ENCODE measurements at regions of chr6 and their contacts with region 1.

Region 1: GRCh38 chr6:26025894-26026832 is 61.1 kb upstream of the HFE start:
- DNase-seq: peak; percentile 90 to 93
- H3K4me3 ChIP-seq: peak overlapping the region; percentile 75 to 89 (median 82)
- H3K27ac ChIP-seq: peak overlapping the region; percentile 80
- H3K4me1 ChIP-seq: peaks cover 3 to 26% (median 10%) of the 10 kb centered on the region in 4 experiments; a peak in 5 of 7 replicates
- H3K27me3 ChIP-seq: no peaks in the 10 kb centered on the region
- CTCF ChIP-seq: peak; percentile 63 to 93 (median 77)
- EP300 ChIP-seq: peak in 1 of 2 experiments; percentile 43; a peak in 1 of 3 replicates
- POLR2A ChIP-seq: peak; percentile 85 to 91; a peak in 2 of 3 replicates
- RAD21 ChIP-seq: peak; percentile 45 to 47

Region 2: DNA sequence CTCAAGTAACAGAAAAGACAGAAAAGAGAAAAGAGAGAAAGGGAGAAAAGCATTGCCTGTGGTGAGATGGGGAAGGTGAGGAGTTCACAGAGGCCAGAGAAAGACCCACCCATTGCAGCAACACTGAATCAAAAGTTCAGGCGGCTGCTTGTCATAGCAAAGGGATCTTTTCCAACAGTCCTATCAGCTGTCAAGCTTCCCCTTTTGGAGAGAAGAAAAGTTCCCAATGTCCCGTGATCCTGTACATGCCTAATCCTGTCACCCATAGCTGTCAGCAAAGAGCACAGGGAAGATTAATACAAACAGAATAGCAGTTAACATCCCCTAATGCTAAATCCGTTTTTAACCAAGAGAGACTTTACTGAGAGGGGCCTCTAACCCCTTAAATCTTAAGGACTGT is 72.4 kb before region 1 on chr6:
- CTCF ChIA-PET with region 1: no interaction called
- POLR2A ChIA-PET with region 1: no interaction called
- DNase-seq: no peak
- H3K4me3 ChIP-seq: no peak overlapping the region
- H3K27ac ChIP-seq: no peak overlapping the region
- H3K4me1 ChIP-seq: peaks cover 0 to 1% (median 0%) of the 10 kb centered on the region in 4 experiments; a peak in 1 of 7 replicates
- H3K27me3 ChIP-seq: no peaks in the 10 kb centered on the region
- CTCF ChIP-seq: no peak
- EP300 ChIP-seq: no peak
- POLR2A ChIP-seq: no peak
- RAD21 ChIP-seq: no peak

Region 3: DNA sequence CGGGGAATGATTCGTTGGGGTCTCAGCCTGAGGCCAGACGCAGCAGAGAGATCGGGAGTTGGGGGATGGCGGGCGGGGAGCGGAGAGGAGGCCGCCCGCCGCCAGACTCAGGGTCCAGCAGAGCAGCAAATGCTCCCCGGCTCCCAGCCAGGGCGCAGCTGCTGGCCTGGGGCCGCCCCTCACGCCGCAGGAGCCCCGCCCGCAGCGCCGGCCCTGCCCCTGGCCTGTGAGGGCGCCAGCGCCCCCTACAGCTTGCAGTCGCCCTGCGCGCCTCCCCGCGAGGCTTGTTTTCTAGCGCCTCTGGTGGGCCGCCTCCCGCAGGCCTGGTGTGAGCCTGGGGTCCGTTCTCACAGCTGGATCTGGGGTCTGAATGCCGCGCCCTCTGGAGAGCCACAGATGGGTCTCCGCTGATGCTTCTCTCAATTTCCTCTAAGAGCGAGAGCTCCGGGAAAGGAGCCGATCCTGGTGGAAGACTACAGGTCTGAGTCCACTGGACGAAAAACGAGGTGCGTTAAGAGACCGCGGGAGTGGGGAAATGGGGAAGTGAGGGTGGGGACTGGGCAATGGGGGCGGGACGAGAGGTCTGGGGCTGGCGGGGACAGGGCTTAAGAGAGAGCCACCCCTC is 33.6 kb before region 1 on chr6:
- CTCF ChIA-PET with region 1: interaction called, 3 read pairs
- POLR2A ChIA-PET with region 1: interaction called, 36 read pairs
- DNase-seq: peak; percentile 82 to 99
- H3K4me3 ChIP-seq: peak overlapping the region; percentile 45 to 81 (median 68)
- H3K27ac ChIP-seq: no peak overlapping the region
- H3K4me1 ChIP-seq: peaks cover 0 to 8% (median 5%) of the 10 kb centered on the region in 4 experiments; a peak in 4 of 7 replicates
- H3K27me3 ChIP-seq: no peaks in the 10 kb centered on the region
- CTCF ChIP-seq: peak; percentile 91 to 99 (median 91)
- EP300 ChIP-seq: peak in 1 of 2 experiments; percentile 69; a peak in 1 of 3 replicates
- POLR2A ChIP-seq: peak; percentile 33 to 74
- RAD21 ChIP-seq: peak; percentile 57 to 77

Region 4: GRCh38 chr6:26065952-26066380 is 39.8 kb after region 1 on chr6:
- CTCF ChIA-PET with region 1: interaction called, 13 read pairs
- POLR2A ChIA-PET with region 1: interaction called, 1,982 read pairs
- DNase-seq: no peak
- H3K4me3 ChIP-seq: no peak overlapping the region
- H3K27ac ChIP-seq: no peak overlapping the region
- H3K4me1 ChIP-seq: no peaks in the 10 kb centered on the region
- H3K27me3 ChIP-seq: no peaks in the 10 kb centered on the region
- CTCF ChIP-seq: peak; percentile 22 to 88 (median 77)
- EP300 ChIP-seq: no peak
- POLR2A ChIP-seq: no peak
- RAD21 ChIP-seq: peak; percentile 87 to 92

Region 5: DNA sequence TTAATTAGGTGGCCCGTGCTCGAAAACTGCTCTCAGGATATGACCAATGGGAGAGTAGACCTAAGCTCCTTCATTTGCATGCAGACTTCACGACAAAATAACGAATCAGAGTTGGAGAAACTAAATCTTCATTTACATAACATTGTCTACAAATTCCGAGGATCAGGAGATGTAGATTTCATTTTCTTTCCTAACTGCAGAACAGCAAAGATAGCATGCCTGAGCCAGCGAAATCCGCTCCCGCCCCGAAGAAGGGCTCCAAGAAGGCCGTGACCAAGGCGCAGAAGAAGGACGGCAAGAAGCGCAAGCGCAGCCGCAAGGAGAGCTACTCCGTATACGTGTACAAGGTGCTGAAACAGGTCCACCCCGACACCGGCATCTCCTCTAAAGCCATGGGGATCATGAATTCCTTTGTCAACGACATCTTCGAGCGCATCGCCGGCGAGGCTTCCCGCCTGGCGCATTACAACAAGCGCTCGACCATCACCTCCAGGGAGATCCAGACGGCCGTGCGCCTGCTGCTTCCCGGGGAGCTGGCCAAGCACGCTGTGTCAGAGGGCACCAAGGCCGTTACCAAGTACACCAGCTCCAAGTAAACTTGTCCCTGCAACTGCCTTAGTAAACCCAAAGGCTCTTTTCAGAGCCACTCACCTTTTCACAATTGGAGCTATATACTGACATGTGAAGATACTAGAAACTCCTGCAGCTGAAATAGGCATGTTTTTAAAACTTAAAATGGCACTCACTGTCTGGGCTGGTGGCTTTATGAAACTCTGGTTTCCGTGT is 157.6 kb after region 1 on chr6:
- CTCF ChIA-PET with region 1: no interaction called
- POLR2A ChIA-PET with region 1: interaction called, 219 read pairs
- DNase-seq: peak in 1 of 2 experiments; percentile 82
- H3K4me3 ChIP-seq: peak overlapping the region; percentile 45 to 73 (median 70)
- H3K27ac ChIP-seq: peak overlapping the region; percentile 97
- H3K4me1 ChIP-seq: peaks cover 0 to 17% (median 8%) of the 10 kb centered on the region in 4 experiments; a peak in 5 of 7 replicates
- H3K27me3 ChIP-seq: no peaks in the 10 kb centered on the region
- CTCF ChIP-seq: no peak
- EP300 ChIP-seq: no peak
- POLR2A ChIP-seq: peak; percentile 94 to 99
- RAD21 ChIP-seq: no peak

Region 6: DNA sequence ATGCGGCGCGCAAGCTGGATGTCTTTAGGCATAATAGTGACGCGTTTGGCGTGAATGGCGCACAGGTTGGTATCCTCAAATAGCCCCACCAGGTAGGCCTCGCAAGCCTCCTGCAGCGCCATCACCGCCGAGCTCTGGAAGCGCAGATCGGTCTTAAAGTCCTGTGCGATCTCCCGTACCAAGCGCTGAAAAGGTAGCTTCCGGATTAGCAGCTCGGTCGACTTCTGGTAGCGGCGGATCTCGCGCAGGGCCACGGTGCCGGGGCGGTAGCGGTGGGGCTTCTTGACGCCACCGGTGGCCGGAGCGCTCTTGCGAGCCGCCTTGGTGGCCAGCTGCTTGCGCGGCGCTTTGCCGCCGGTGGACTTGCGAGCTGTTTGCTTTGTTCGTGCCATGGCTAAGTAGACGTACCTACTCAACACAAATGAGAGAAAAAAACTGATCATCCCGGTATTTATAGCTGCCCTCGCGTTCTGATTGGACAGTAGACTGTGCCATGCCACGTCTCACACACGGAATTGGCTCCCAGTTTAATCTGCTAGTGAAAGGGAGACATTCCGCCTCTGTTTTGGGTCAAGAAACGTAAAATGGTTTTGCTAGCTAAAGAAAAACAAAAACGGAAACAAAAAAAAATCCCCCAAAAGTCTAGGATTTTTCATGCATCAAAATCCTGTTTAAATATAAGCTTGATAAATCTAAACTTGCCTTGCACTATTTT is 1845.9 kb after region 1 on chr6:
- CTCF ChIA-PET with region 1: no interaction called
- POLR2A ChIA-PET with region 1: interaction called, 57 read pairs
- DNase-seq: peak in 1 of 2 experiments; percentile 89
- H3K4me3 ChIP-seq: peak overlapping the region; percentile 61 to 73 (median 67)
- H3K27ac ChIP-seq: peak overlapping the region; percentile 96
- H3K4me1 ChIP-seq: peaks cover 0 to 16% (median 9%) of the 10 kb centered on the region in 4 experiments; a peak in 5 of 7 replicates
- H3K27me3 ChIP-seq: no peaks in the 10 kb centered on the region
- CTCF ChIP-seq: peak in 2 of 3 experiments; percentile 22 to 26; a peak in 3 of 4 replicates
- EP300 ChIP-seq: no peak; a peak in 1 of 3 replicates
- POLR2A ChIP-seq: peak; percentile 97 to 98
- RAD21 ChIP-seq: no peak